ENCODE measurements at regions of chr7 and their contacts with region 1.

Region 1: GRCh38 chr7:111089822-111090426 is 1.0 kb upstream of the LRRN3 start:
- DNase-seq: peak; percentile 61
- H3K4me3 ChIP-seq: no peak overlapping the region
- H3K27ac ChIP-seq: peak overlapping the region; percentile 1 to 88; a peak in 1 of 4 replicates
- H3K4me1 ChIP-seq: peaks cover 5 to 20% of the 10 kb centered on the region in 2 experiments; a peak in 3 of 4 replicates
- H3K27me3 ChIP-seq: no peaks in the 10 kb centered on the region
- CTCF ChIP-seq: peak; percentile 97
- EP300 ChIP-seq: no peak
- RAD21 ChIP-seq: peak; percentile 88

Region 2: DNA sequence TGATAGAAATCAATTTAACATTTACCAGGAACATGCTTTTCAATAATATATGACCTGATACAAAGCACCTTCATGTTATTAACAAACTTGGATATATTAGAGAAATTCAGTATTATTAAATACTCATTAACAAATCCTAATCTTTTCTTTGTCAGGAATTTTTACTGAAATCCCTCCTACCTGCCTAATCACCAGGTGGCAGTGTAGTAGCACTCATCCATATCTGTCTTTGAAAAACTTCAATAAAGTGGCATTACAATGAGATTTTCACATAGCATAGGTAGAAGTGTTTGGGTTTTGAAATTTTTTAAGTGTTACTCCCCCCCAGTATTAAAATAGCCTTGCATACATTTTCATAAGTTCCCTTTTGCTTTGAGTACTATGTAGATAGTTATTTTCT is 1245.6 kb before region 1 on chr7:
- CTCF ChIA-PET with region 1: interaction called, 20 read pairs
- POLR2A ChIA-PET with region 1: no interaction called
- DNase-seq: peak; percentile 32
- H3K4me3 ChIP-seq: no peak overlapping the region
- H3K27ac ChIP-seq: peak overlapping the region in 1 of 2 experiments; percentile 43; a peak in 2 of 4 replicates
- H3K4me1 ChIP-seq: no peaks in the 10 kb centered on the region; a peak in 1 of 4 replicates
- H3K27me3 ChIP-seq: no peaks in the 10 kb centered on the region
- CTCF ChIP-seq: peak; percentile 51
- EP300 ChIP-seq: no peak
- RAD21 ChIP-seq: peak; percentile 94

Region 3: GRCh38 chr7:111053035-111053434 is 36.9 kb before region 1 on chr7:
- CTCF ChIA-PET with region 1: no interaction called
- POLR2A ChIA-PET with region 1: no interaction called
- DNase-seq: no peak
- H3K4me3 ChIP-seq: no peak overlapping the region
- H3K27ac ChIP-seq: no peak overlapping the region
- H3K4me1 ChIP-seq: peaks cover 0 to 6% of the 10 kb centered on the region in 2 experiments; a peak in 2 of 4 replicates
- H3K27me3 ChIP-seq: no peaks in the 10 kb centered on the region
- CTCF ChIP-seq: no peak
- EP300 ChIP-seq: no peak
- RAD21 ChIP-seq: no peak

Region 4: DNA sequence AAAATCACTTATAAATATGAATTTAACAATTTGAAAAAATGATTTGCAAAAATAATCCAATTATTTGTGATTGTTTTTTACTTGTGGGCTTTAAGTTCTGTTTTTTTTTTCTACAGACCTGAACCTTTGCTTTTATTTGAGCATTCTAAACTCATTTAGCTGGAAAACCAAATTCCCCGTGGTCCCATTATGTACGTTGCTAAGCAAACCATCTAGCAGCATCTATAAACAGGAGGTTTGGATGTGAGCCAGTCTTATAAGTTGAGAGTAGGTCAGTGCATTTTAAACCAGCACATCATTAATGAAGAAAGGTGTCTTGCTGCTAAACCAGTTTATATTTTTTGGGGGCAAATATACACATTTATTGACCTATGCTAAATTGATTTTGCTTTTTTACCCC is 78.3 kb after region 1 on chr7:
- CTCF ChIA-PET with region 1: no interaction called
- POLR2A ChIA-PET with region 1: no interaction called
- DNase-seq: no peak
- H3K4me3 ChIP-seq: no peak overlapping the region
- H3K27ac ChIP-seq: no peak overlapping the region; a peak in 1 of 4 replicates
- H3K4me1 ChIP-seq: peaks cover 0 to 5% of the 10 kb centered on the region in 2 experiments; a peak in 2 of 4 replicates
- H3K27me3 ChIP-seq: no peaks in the 10 kb centered on the region
- CTCF ChIP-seq: no peak
- EP300 ChIP-seq: no peak
- RAD21 ChIP-seq: no peak

Region 5: DNA sequence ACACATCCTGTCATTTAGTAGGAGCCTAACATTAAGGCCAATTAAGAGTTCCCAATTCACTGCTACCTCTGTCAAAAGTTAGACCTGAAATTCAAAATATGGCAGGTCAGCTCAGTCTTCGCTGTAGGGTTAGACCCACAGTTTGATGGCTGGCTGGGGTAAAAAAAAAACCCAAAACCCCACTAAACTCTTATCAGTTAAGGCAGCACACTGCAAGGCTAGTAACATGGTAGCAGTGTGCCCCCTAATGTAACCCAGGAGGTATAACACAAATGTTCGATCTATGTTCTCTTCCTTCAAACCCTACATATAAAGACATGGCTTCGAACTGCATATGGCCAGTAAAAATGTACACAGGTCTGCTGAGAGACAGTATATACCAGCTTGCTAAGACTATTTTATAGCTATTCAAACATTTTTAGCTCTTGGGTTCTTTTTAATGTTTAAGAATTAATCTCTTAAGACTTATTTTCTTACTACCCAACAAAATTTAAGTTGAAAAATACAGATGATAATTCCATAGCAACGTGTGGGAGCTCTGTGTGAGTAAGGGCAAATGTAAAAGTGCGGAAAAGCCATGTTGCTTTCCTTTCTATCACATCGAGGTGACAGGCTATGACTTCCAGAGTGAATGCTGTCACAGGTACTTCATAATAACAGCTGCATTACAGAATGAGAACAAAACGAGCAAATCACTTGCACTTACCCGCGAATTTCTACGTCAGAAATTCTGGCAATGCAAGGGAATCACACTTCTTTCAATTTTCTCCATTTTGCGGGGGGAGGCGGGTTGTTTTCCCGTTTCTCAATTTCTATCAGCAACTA is 640.8 kb after region 1 on chr7:
- CTCF ChIA-PET with region 1: interaction called, 35 read pairs
- POLR2A ChIA-PET with region 1: no interaction called
- DNase-seq: peak; percentile 71
- H3K4me3 ChIP-seq: no peak overlapping the region
- H3K27ac ChIP-seq: peak overlapping the region in 1 of 2 experiments; percentile 67; a peak in 2 of 4 replicates
- H3K4me1 ChIP-seq: peaks cover 0 to 24% of the 10 kb centered on the region in 2 experiments; a peak in 2 of 4 replicates
- H3K27me3 ChIP-seq: no peaks in the 10 kb centered on the region
- CTCF ChIP-seq: peak; percentile 78
- EP300 ChIP-seq: no peak
- RAD21 ChIP-seq: peak; percentile 91

Region 6: DNA sequence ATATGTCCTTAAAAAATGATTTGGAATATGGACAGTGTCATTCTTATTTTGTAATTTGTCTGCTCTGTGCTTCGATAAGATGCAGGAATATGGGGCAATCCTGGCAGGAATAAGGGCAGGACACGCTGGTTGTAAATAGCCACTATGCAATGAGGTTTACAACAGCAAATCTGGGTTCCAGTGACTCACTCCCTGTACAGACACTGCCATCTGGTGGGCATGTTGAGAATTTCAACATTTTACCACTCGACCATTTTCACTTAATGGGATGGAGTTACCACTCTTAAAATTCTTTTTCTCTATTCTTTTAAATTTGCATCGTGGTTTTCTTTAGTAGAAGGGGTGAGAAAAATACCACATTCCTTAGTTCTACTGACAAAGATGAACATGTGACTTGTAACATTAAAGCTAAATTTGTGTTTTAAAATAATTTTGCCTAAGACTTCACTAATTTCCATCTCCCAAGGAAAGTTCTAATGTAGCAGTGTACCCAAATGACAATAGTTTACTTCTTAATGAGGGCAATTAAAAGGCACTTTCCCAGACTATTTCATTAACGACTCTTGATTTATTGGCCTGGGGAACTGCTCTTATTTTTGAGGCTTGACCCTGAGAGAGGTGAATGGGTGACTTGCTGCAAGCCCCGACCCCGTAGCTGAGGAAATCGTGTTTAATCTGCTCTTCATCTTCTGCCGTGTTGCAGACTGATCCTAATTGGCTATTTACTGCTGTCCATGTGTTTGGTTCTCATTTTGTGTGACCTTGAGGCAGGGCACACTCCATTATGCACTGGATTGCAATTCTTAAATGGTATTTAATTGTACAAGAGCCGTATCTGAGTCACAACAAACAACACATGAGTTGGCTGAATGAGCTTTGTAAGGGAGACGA is 646.0 kb after region 1 on chr7:
- CTCF ChIA-PET with region 1: interaction called, 35 read pairs
- POLR2A ChIA-PET with region 1: no interaction called
- DNase-seq: peak; percentile 77
- H3K4me3 ChIP-seq: no peak overlapping the region; a peak in 1 of 4 replicates
- H3K27ac ChIP-seq: no peak overlapping the region; a peak in 1 of 4 replicates
- H3K4me1 ChIP-seq: peaks cover 0 to 19% of the 10 kb centered on the region in 2 experiments; a peak in 2 of 4 replicates
- H3K27me3 ChIP-seq: no peaks in the 10 kb centered on the region
- CTCF ChIP-seq: peak; percentile 98
- EP300 ChIP-seq: peak in 1 of 2 experiments; percentile 46; a peak in 1 of 4 replicates
- RAD21 ChIP-seq: peak; percentile 100